Activated CD4-positive, alpha-beta T cell treated with anti-CD3 and anti-CD28 coated beads, Interleukin-2, amount 10 ng/mL, durations not matched to agents 24 days and 14 days (primary cell): ENCODE measurements at regions of chr3 and their contacts with region 1.

Region 1: DNA sequence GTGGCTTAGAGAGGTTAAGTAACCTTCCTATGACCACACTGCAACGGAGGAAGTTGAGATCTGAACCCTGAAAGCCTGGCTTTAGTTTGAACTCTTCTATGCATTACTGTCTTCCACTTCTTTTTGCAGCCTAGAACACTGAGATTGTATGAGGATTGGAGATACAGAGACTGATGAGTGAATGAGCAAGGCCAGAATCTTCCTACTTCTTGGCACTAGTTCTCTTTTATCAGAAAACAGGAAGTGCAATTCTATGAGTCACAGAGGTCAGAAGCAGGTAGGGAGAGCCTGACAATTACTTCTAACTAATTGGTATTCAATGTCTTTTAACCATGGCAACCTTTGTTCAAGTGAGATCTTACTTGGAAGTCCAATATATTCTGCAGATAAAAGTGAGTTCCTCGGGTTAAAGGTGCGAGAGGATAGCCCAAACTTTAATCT is 219.0 kb downstream of the SHQ1 start:
- DNase-seq: peak; percentile 60
- H3K4me3 Mint-ChIP-seq: peak overlapping the region; percentile 37
- H3K27ac Mint-ChIP-seq: peak overlapping the region; percentile 78
- H3K4me1 Mint-ChIP-seq: peaks cover 48% of the 10 kb centered on the region
- H3K27me3 Mint-ChIP-seq: no peaks in the 10 kb centered on the region

Region 2: DNA sequence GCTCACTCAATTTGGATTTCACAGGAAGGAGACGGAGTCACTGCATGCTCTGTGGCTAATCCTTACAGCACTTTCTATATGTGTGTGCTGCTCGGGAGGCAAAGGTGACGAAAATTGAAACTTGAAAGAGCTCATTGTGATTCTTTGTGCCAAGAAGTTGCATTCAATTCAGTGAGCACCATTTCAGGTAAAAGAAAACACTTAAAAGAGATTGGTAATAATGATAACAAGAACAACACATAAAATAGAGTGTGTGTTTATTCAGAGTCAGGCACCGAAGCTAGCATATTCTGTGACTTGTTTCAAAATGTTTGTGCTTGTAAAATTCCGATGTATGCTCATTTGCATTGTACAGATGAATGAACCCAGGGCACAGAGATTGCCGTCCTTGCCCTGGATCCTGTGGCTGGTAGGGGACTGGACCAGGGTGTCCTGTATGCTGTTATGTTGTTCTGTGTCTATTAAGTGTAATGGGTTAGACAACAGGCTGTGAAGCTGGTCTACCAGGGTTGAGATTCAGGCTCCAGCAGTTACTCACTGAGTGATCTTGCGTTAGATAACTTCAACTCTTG is 651.0 kb before region 1 on chr3:
- intact Hi-C with region 1: loop called (anchors 10 kb)
- DNase-seq: peak; percentile 76
- H3K4me3 Mint-ChIP-seq: peak overlapping the region; percentile 59
- H3K27ac Mint-ChIP-seq: peak overlapping the region; percentile 88
- H3K4me1 Mint-ChIP-seq: peaks cover 45% of the 10 kb centered on the region
- H3K27me3 Mint-ChIP-seq: no peaks in the 10 kb centered on the region

Region 3: GRCh38 chr3:72339116-72340030 is 289.8 kb before region 1 on chr3:
- intact Hi-C with region 1: loop called (anchors 2 kb)
- DNase-seq: no peak
- H3K4me3 Mint-ChIP-seq: no peak overlapping the region
- H3K27ac Mint-ChIP-seq: no peak overlapping the region
- H3K4me1 Mint-ChIP-seq: peaks cover 32% of the 10 kb centered on the region
- H3K27me3 Mint-ChIP-seq: no peaks in the 10 kb centered on the region

Region 4: GRCh38 chr3:72482589-72483321 is 146.5 kb before region 1 on chr3:
- intact Hi-C with region 1: loop called (anchors 1 kb)
- DNase-seq: peak; percentile 85
- H3K4me3 Mint-ChIP-seq: peak overlapping the region; percentile 78
- H3K27ac Mint-ChIP-seq: peak overlapping the region; percentile 96
- H3K4me1 Mint-ChIP-seq: peaks cover 67% of the 10 kb centered on the region
- H3K27me3 Mint-ChIP-seq: no peaks in the 10 kb centered on the region

Region 5: GRCh38 chr3:72538070-72538745 is 91.0 kb before region 1 on chr3:
- intact Hi-C with region 1: loop called (anchors 5 kb)
- DNase-seq: no peak
- H3K4me3 Mint-ChIP-seq: no peak overlapping the region
- H3K27ac Mint-ChIP-seq: peak overlapping the region; percentile 75
- H3K4me1 Mint-ChIP-seq: peaks cover 32% of the 10 kb centered on the region
- H3K27me3 Mint-ChIP-seq: no peaks in the 10 kb centered on the region

Region 6: GRCh38 chr3:72756900-72757299 is 127.7 kb after region 1 on chr3:
- intact Hi-C with region 1: loop called (anchors 2 kb)
- DNase-seq: peak; percentile 87
- H3K4me3 Mint-ChIP-seq: peak overlapping the region; percentile 60
- H3K27ac Mint-ChIP-seq: peak overlapping the region; percentile 81
- H3K4me1 Mint-ChIP-seq: peaks cover 39% of the 10 kb centered on the region
- H3K27me3 Mint-ChIP-seq: no peaks in the 10 kb centered on the region

Region 7: DNA sequence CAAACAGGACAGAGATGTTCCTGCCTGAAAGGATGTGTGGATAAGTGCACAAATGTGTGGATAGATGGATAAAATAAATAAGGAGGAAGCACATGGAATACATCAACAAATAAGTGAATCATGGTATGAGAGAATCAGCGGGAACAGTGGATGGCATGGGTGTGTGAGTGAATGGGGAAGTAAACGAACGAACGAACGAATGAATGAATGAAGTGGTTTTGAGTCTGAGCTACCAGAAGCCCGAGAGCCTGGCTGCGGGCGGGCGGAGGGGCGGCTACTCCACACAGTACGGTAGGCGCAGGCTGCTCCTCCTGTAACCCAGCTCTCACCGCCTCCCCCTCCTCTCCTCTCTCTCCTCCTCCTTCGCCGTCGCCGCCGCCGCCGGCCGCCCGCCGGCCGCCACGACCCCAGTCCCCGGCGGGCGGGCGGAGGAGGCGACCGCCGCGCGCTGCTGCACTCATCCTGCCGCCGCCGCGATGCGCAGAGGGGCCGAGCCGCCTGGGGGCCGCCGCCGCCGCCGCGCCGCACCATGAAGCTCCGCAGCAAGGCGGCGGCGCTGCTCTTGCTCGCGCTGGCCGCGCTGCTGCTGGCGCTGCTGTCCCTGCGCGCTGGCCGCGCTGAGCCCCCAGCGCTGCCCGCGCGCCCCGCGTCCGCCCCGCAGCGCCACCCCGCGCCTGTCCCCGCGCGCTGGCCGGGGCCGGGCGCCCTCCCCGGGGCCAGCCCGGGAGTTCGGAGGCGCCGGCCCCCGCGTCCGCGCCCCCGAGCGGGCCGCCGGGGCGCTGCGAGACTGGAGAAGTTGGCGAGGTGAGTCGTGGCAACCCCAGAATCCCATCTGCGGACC is 258.7 kb after region 1 on chr3 and contains the start of gene GXYLT2:
- intact Hi-C with region 1: no loop called
- DNase-seq: peak; percentile 79
- H3K4me3 Mint-ChIP-seq: peak within 1 kb of the TSS; percentile 82
- H3K27ac Mint-ChIP-seq: no peak within 1 kb of the TSS
- H3K4me1 Mint-ChIP-seq: peaks cover 8% of the 10 kb centered on the region
- H3K27me3 Mint-ChIP-seq: peaks cover 83% of the 10 kb centered on the region
- total RNA-seq, gene GXYLT2: not detected in 2 replicates